ENCODE measurements at regions of chr12 and their contacts with region 1.

Region 1: DNA sequence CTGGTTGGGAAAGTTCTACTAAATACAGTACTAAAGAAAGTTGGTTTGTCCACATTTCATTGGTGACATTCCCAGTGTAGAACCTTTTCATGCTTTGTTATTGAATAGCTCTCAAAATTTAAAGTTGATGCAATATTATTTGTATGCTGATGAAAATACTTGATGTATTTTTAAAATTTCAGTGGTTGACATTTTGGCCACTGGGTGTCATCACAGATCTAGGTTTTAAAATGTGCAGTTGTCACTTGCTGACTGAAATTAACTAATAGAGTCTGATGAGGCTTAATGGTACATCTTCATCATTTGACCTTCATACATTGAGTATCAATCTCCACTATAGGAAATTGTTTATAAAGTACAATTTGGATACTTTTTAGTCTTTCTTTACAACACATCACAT is 37.1 kb downstream of the CMAS start:
- DNase-seq: no peak
- H3K4me3 ChIP-seq: no peak overlapping the region
- H3K27ac ChIP-seq: no peak overlapping the region
- H3K4me1 ChIP-seq: no peaks in the 10 kb centered on the region
- H3K27me3 ChIP-seq: peaks cover 6% of the 10 kb centered on the region; the same call in 1 of the 2 replicates
- CTCF ChIP-seq: peak; percentile 59
- EP300 ChIP-seq: no peak
- RAD21 ChIP-seq: peak; percentile 68

Region 2: GRCh38 chr12:22069856-22070565 is 13.2 kb before region 1 on chr12:
- CTCF ChIA-PET with region 1: interaction called, 13 read pairs
- POLR2A ChIA-PET with region 1: no interaction called
- DNase-seq: no peak
- H3K4me3 ChIP-seq: no peak overlapping the region
- H3K27ac ChIP-seq: no peak overlapping the region
- H3K4me1 ChIP-seq: no peaks in the 10 kb centered on the region
- H3K27me3 ChIP-seq: no peaks in the 10 kb centered on the region; the same call in 1 of the 2 replicates
- CTCF ChIP-seq: no peak
- EP300 ChIP-seq: no peak
- RAD21 ChIP-seq: no peak

Region 3: GRCh38 chr12:22443379-22444316 is 360.5 kb after region 1 on chr12:
- CTCF ChIA-PET with region 1: interaction called, 10 read pairs
- POLR2A ChIA-PET with region 1: no interaction called
- DNase-seq: peak; percentile 57
- H3K4me3 ChIP-seq: peak overlapping the region in 1 of 2 experiments; percentile 36; a peak in 2 of 4 replicates
- H3K27ac ChIP-seq: no peak overlapping the region
- H3K4me1 ChIP-seq: peaks cover 0 to 8% of the 10 kb centered on the region in 2 experiments; a peak in 1 of 4 replicates
- H3K27me3 ChIP-seq: no peaks in the 10 kb centered on the region; the same call in 1 of the 2 replicates
- CTCF ChIP-seq: peak; percentile 79
- EP300 ChIP-seq: no peak
- RAD21 ChIP-seq: peak; percentile 86

Measured in SK-N-SH (cell line).